OCI-LY7 (cell line): ENCODE measurements at regions of chr3 and their contacts with region 1.

Region 1: DNA sequence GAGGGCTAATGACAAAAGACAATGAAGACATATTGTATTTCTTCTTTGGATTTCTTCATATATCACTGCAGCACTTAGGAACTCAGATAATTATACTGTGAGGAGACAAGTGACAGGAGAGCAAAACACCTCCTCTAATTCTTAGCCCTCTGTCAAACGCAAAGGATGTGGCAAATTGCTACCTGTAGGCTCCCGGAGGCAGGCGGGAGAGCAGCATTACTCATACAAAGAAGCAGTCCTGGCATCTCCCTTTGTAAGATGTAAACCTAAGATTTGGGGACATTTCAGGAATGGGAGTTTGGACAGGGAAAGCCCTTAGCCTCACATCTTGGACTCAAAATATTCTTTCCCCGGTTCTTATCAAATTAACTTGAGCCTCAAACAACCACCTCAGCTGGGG is 460.8 kb downstream of the SOX2 start:
- DNase-seq: no peak
- H3K4me3 ChIP-seq: no peak overlapping the region
- H3K27ac ChIP-seq: no peak overlapping the region
- H3K4me1 ChIP-seq: no peaks in the 10 kb centered on the region
- CTCF ChIP-seq: no peak

Region 2: GRCh38 chr3:180855364-180855763 is 1317.2 kb before region 1 on chr3:
- CTCF ChIA-PET with region 1: no interaction called
- POLR2A ChIA-PET with region 1: no interaction called
- intact Hi-C with region 1: no loop called
- DNase-seq: peak; percentile 20
- H3K4me3 ChIP-seq: no peak overlapping the region
- H3K27ac ChIP-seq: no peak overlapping the region
- H3K4me1 ChIP-seq: no peaks in the 10 kb centered on the region
- CTCF ChIP-seq: peak; percentile 63

Region 3: DNA sequence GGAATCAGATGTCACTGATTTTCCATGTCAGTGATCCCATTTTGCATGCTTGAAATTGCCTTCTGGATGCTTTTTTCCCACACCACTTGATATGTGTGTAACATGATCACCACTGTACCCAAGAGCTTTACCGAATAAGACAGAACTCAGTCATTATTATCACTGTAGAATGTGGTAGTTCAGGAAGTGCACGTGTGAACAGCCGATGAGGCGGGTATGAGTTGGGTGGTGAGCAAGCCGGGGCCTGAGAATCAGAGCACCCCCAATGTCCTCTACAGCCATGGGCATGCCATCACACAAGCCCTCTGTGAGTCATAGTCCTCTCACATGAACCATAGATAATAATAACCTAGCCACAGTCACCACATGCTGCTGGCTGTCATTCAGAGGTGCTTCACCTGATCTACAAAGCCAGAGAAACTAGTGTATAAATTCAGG is 10.0 kb after region 1 on chr3:
- CTCF ChIA-PET with region 1: no interaction called
- POLR2A ChIA-PET with region 1: interaction called, 14 read pairs
- intact Hi-C with region 1: no loop called
- DNase-seq: no peak
- H3K4me3 ChIP-seq: no peak overlapping the region
- H3K27ac ChIP-seq: no peak overlapping the region
- H3K4me1 ChIP-seq: no peaks in the 10 kb centered on the region
- CTCF ChIP-seq: no peak

Region 4: DNA sequence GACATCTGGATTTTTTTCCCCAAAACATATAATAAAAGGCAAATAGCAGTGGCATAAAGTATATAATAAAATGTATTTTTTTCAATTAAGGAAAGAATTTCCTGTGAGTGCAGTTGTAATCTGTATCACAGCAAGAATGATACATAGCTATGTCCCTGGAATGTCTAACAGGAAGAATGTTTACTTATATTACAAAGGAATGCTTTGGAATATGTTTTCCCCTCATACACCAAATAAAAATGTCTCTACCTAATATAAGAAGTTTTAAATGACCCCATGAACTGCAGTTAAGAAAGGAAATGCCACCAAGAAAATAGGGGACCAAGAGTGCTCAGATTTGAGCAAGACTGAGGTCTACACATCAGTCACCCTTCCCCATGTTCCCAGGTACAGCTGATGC is 582.8 kb after region 1 on chr3:
- CTCF ChIA-PET with region 1: no interaction called
- POLR2A ChIA-PET with region 1: no interaction called
- intact Hi-C with region 1: no loop called
- DNase-seq: no peak
- H3K4me3 ChIP-seq: no peak overlapping the region
- H3K27ac ChIP-seq: no peak overlapping the region
- H3K4me1 ChIP-seq: no peaks in the 10 kb centered on the region
- CTCF ChIP-seq: no peak